ENCODE measurements at regions of chr19 and their contacts with region 1.

Region 1: GRCh38 chr19:38929929-38930775 is at the start of gene SARS2:
- DNase-seq: peak; percentile 89
- ATAC-seq: peak; percentile 73
- H3K4me3 ChIP-seq: peak within 1 kb of the TSS; percentile 98 to 100
- H3K27ac ChIP-seq: peak within 1 kb of the TSS; percentile 82
- H3K4me1 ChIP-seq: peaks cover 11 to 20% of the 10 kb centered on the region in 2 experiments; a peak in 3 of 4 replicates
- H3K27me3 ChIP-seq: no peaks in the 10 kb centered on the region
- CTCF ChIP-seq: peak; percentile 98 to 99 (median 99)
- POLR2A ChIP-seq: peak; percentile 70
- RAD21 ChIP-seq: peak; percentile 88
- total RNA-seq, gene SARS2: 58.2 TPM

Region 2: DNA sequence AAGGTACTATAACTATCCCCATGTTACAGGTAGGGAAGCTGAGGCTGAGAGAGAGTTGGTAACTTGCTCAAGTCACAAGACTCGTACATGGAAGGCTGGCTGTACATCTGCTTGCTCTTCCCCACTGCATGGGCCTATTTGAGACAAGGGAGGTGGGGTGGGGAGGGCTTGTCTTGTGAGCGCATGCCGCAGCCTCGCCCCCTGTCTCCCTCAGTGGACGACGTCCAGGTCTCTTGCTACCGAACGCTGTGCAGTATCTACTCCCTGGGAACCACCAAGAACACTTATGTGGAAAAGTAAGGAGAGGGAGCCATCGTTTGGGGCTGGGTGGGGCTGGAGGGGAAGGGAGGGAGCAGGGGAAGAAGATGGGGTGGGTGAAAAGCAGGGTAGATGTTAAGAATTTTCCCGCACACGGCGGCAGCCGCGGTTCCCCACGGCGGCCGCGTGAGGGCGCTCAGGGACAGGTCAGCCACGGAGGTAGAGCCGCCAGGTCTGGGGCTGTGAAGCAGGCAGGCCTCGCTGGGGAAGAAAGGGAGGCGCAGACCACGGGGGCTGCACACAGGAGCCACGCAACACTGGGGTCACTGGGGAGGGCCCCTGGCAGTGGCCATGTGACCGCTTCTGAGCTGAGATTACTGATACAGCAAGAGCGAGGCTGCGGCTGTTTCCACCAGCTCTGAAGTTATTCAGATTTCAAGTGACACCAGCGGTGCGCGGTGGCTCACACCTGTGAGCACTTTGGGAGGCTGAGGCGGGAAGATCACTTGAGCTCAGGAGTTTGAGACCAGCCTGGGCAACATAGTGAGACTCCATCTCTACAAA is 415.1 kb before region 1 on chr19:
- CTCF ChIA-PET with region 1: interaction called, 8 read pairs
- POLR2A ChIA-PET with region 1: no interaction called
- RAD21 ChIA-PET with region 1: no interaction called
- intact Hi-C with region 1: loop called (anchors 10 kb)
- DNase-seq: peak; percentile 27
- ATAC-seq: peak; percentile 97
- H3K4me3 ChIP-seq: no peak overlapping the region
- H3K27ac ChIP-seq: no peak overlapping the region
- H3K4me1 ChIP-seq: peaks cover 2 to 9% of the 10 kb centered on the region in 2 experiments; a peak in 2 of 4 replicates
- H3K27me3 ChIP-seq: no peaks in the 10 kb centered on the region
- CTCF ChIP-seq: peak; percentile 74 to 91 (median 84)
- POLR2A ChIP-seq: no peak
- RAD21 ChIP-seq: peak; percentile 89

Region 3: GRCh38 chr19:38634757-38635482 is 295.2 kb before region 1 on chr19:
- CTCF ChIA-PET with region 1: interaction called, 7 read pairs
- POLR2A ChIA-PET with region 1: no interaction called
- RAD21 ChIA-PET with region 1: no interaction called
- intact Hi-C with region 1: loop called (anchors 5 kb)
- DNase-seq: no peak
- ATAC-seq: peak; percentile 50
- H3K4me3 ChIP-seq: no peak overlapping the region
- H3K27ac ChIP-seq: no peak overlapping the region; the same call in 1 of the 2 replicates
- H3K4me1 ChIP-seq: peaks cover 15 to 49% of the 10 kb centered on the region in 2 experiments
- H3K27me3 ChIP-seq: no peaks in the 10 kb centered on the region
- CTCF ChIP-seq: peak; percentile 72 to 95 (median 88)
- POLR2A ChIP-seq: no peak
- RAD21 ChIP-seq: peak; percentile 76

Region 4: GRCh38 chr19:38849860-38850435 is 80.2 kb before region 1 on chr19 and contains the start of gene HNRNPL:
- CTCF ChIA-PET with region 1: interaction called, 8 read pairs
- POLR2A ChIA-PET with region 1: interaction called, 10 read pairs
- RAD21 ChIA-PET with region 1: no interaction called
- intact Hi-C with region 1: loop called (anchors 2 kb)
- DNase-seq: no peak
- ATAC-seq: peak; percentile 75
- H3K4me3 ChIP-seq: peak within 1 kb of the TSS; percentile 77 to 84
- H3K27ac ChIP-seq: peak within 1 kb of the TSS; percentile 98
- H3K4me1 ChIP-seq: peaks cover 14 to 41% of the 10 kb centered on the region in 2 experiments
- H3K27me3 ChIP-seq: no peaks in the 10 kb centered on the region
- CTCF ChIP-seq: peak in 1 of 3 experiments; percentile 40; a peak in 3 of 6 replicates
- POLR2A ChIP-seq: no peak
- RAD21 ChIP-seq: no peak
- total RNA-seq, gene HNRNPL: 551 TPM

Region 5: DNA sequence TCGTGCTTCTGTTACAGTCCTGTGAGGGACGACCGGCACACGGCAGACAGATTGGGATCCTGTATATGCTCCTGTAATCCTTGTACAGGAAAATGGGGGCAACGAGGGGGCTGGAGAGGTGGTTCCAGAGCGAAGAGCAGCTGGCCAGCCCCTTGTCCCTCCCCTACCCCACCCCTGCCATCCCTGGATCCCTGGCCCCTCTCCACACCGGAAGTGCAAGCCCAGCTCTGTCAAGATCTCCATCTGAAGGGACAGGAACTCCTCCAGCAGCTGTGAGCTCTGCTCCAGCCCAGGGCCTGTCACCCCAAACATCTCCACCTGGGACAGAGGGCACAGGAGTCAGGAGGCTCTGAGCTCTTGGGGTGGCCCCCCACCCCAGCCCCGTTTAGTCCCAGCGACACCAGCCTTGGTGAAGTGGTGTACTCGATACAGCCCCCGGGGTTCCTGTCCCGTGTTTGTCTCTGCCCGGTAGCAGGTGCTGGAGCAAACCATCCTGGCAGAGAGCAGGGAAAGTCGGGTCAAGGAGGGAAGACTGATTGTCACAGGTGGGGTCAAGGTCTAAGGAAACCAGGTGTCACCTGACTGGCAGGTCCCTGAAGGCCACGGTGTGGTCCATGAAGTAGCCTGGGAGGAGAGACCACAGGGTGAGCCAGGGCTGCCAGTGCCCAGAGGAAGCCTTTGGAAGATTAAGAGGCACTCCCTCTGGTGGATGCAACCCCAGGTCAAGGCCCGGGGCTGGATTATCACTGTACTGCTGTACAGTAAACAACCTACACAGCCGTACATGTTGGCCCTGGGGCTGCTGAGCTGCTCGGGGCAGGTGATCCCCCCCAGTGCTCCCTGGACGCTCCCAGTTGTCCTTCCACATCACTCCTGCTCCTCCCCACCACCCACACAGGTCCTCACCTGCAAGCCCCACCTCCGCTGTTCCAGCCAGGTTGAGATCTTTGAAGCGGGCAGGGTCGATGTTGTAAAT is 12.3 kb before region 1 on chr19:
- CTCF ChIA-PET with region 1: interaction called, 10 read pairs
- POLR2A ChIA-PET with region 1: interaction called, 4 read pairs
- RAD21 ChIA-PET with region 1: no interaction called
- intact Hi-C with region 1: no loop called
- DNase-seq: no peak
- ATAC-seq: peak; percentile 73
- H3K4me3 ChIP-seq: no peak overlapping the region
- H3K27ac ChIP-seq: no peak overlapping the region
- H3K4me1 ChIP-seq: no peaks in the 10 kb centered on the region
- H3K27me3 ChIP-seq: no peaks in the 10 kb centered on the region
- CTCF ChIP-seq: no peak
- POLR2A ChIP-seq: no peak
- RAD21 ChIP-seq: peak; percentile 33; the same call in 1 of the 2 replicates